ENCODE measurements at regions of chr22 and their contacts with region 1.

Region 1: GRCh38 chr22:41966607-41967240 is 2.5 kb upstream of the SEPTIN3 start:
- DNase-seq: peak; percentile 69
- H3K4me3 Mint-ChIP-seq: no peak overlapping the region
- H3K27ac Mint-ChIP-seq: no peak overlapping the region
- H3K4me1 Mint-ChIP-seq: peaks cover 2% of the 10 kb centered on the region
- H3K27me3 Mint-ChIP-seq: no peaks in the 10 kb centered on the region

Region 2: GRCh38 chr22:41808400-41808799 is 158.3 kb before region 1 on chr22:
- CTCF ChIA-PET with region 1: no interaction called
- intact Hi-C with region 1: no loop called
- DNase-seq: no peak
- H3K4me3 Mint-ChIP-seq: no peak overlapping the region
- H3K27ac Mint-ChIP-seq: no peak overlapping the region
- H3K4me1 Mint-ChIP-seq: peaks cover 14% of the 10 kb centered on the region
- H3K27me3 Mint-ChIP-seq: no peaks in the 10 kb centered on the region

Region 3: DNA sequence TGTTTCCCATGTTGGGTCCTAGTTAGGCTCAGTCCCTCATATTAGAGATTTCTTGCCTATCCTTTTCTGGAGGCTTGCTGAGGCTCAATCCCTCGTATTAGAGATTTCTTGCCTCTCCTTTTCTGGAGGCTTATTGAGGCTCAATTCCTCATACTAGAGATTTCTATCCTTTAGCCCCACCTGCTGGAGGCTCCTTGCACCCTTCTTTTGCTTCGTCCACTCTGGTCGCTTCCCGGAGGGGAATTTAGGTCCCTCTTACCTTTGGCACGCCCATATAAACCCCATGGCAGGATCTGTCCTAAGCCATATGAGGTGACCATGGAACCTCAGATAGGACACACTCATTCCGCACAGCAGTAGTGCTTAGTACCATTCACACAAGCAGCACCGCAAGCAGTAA is 148.0 kb after region 1 on chr22:
- CTCF ChIA-PET with region 1: interaction called, 6 read pairs
- intact Hi-C with region 1: loop called (anchors 5 kb)
- DNase-seq: peak; percentile 18
- H3K4me3 Mint-ChIP-seq: no peak overlapping the region
- H3K27ac Mint-ChIP-seq: no peak overlapping the region
- H3K4me1 Mint-ChIP-seq: peaks cover 8% of the 10 kb centered on the region
- H3K27me3 Mint-ChIP-seq: no peaks in the 10 kb centered on the region

Region 4: GRCh38 chr22:42313804-42314581 is 347.3 kb after region 1 on chr22:
- CTCF ChIA-PET with region 1: no interaction called
- intact Hi-C with region 1: loop called (anchors 1 kb)
- DNase-seq: peak; percentile 73
- H3K4me3 Mint-ChIP-seq: no peak overlapping the region
- H3K27ac Mint-ChIP-seq: no peak overlapping the region
- H3K4me1 Mint-ChIP-seq: peaks cover 46% of the 10 kb centered on the region
- H3K27me3 Mint-ChIP-seq: no peaks in the 10 kb centered on the region

Measured in activated naive CD4-positive, alpha-beta T cell treated with anti-CD3 and anti-CD28 coated beads for 36 hours (primary cell).